Common myeloid progenitor, CD34-positive (primary cell): ENCODE measurements at regions of chr17 and their contacts with region 1.

Region 1: GRCh38 chr17:7484067-7484918 is at the start of gene POLR2A:
- DNase-seq: peak; percentile 97 to 99 (median 98)
- H3K4me3 ChIP-seq: peak within 1 kb of the TSS; percentile 59 to 97 (median 84)
- H3K27ac ChIP-seq: peak within 1 kb of the TSS; percentile 99 to 100
- H3K4me1 ChIP-seq: peaks cover 12 to 60% (median 46%) of the 10 kb centered on the region in 4 experiments
- H3K27me3 ChIP-seq: no peaks in the 10 kb centered on the region

Region 2: DNA sequence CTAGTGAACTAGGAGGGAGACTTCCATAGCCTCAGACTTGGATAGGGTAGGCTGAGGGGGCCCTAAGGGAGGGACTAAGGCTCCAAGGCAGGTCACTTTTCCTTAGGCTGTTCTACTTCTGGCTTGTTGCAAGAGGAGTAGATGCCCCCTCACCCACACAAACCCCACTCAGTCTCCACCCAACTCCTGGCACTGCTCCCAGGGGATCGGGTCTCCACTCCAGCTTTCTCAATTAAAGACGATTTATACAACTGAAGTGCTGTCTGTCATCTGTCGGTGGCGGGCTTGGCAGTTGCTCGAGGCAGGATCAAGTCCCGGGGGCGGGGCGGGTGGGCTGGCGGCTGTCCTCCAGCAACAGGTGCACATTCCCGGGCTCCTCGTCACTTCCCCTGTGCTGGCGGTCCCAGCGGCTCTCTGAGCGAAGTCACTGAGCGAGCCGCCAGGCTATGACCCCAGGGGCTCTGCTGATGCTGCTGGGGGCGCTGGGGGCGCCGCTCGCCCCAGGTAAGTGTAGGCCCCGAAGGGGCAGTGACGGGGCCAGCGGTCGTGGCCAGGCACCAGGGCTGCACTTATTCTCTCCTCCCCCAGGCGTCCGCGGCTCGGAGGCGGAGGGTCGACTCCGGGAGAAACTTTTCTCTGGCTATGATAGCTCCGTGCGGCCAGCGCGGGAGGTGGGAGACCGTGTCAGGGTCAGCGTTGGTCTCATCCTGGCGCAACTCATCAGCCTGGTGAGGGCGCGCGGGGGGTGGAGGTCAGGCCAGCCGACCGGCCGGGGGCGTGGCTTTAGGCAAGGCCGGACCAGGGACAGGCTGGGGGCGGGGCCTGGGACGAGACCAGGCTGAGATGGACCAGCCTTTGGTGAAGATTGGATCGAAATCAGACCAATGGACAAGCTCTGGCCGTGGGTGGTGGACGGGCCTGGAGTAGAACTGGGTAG is 39.3 kb before region 1 on chr17 and contains the start of gene CHRNB1:
- CTCF ChIA-PET with region 1: interaction called, 3 read pairs
- POLR2A ChIA-PET with region 1: interaction called, 11 read pairs
- DNase-seq: peak in 2 of 3 donors; percentile 64 to 72
- H3K4me3 ChIP-seq: peak within 1 kb of the TSS; percentile 23 to 74 (median 61)
- H3K27ac ChIP-seq: no peak within 1 kb of the TSS
- H3K4me1 ChIP-seq: peaks cover 3 to 32% (median 29%) of the 10 kb centered on the region in 4 experiments
- H3K27me3 ChIP-seq: peaks cover 4 to 73% (median 37%) of the 10 kb centered on the region in 5 experiments